Endothelial cell of umbilical vein (primary cell): ENCODE measurements at regions of chr22 and their contacts with region 1.

Region 1: DNA sequence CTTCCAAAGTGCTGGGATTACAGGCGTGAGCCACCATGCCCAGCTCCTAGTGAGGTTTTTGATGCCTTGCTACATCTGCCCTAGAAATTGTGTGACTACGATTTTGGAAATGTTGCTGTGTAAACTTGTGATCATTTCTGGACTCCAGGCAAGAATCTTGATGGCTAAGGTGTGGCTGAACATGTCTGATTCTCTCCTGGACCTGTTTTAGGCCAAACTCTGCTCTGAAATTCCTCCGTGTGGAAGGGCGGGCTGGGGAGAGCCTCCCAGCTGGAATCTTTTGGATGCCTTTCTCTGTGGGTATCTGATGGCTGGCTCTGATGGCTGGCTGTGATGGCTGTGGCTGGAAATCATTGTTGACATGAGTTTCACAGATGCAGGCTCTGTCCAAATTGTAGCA is 8.2 kb downstream of the PNPLA3 start:
- DNase-seq: no peak
- H3K4me3 ChIP-seq: no peak overlapping the region
- H3K27ac ChIP-seq: no peak overlapping the region
- H3K4me1 ChIP-seq: no peaks in the 10 kb centered on the region
- H3K27me3 ChIP-seq: no peaks in the 10 kb centered on the region
- CTCF ChIP-seq: no peak
- POLR2A ChIP-seq: no peak

Region 2: GRCh38 chr22:43796567-43796966 is 135.2 kb before region 1 on chr22:
- CTCF ChIA-PET with region 1: no interaction called
- POLR2A ChIA-PET with region 1: no interaction called
- dilution Hi-C with region 1: no loop called
- intact Hi-C with region 1: no loop called
- DNase-seq: no peak
- H3K4me3 ChIP-seq: no peak overlapping the region
- H3K27ac ChIP-seq: no peak overlapping the region
- H3K4me1 ChIP-seq: no peaks in the 10 kb centered on the region
- H3K27me3 ChIP-seq: peaks cover 0 to 6% of the 10 kb centered on the region in 2 experiments
- CTCF ChIP-seq: peak in 1 of 2 donors; percentile 8
- POLR2A ChIP-seq: no peak

Region 3: DNA sequence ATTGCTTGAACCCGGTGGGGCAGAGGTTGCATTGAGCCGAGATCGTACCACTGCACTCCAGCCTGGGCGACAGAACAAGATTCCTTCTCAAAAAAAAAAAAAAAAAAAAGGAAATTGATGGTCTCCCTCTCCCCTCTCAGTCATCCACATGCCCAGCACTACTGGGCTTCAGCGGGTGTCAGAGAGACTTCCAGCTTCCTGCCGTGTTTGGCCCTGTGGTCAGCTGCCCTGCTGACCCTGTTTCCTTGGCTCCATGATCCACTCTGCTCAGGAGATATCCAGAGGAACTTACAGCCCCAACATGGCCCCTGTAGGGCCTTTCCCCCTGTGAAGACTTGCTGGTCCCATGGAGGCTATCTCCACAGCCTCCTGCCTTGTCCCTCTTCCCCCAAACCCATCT is 14.2 kb before region 1 on chr22:
- CTCF ChIA-PET with region 1: no interaction called
- POLR2A ChIA-PET with region 1: no interaction called
- dilution Hi-C with region 1: no loop called
- intact Hi-C with region 1: no loop called
- DNase-seq: no peak
- H3K4me3 ChIP-seq: no peak overlapping the region
- H3K27ac ChIP-seq: no peak overlapping the region
- H3K4me1 ChIP-seq: peaks cover 17% of the 10 kb centered on the region
- H3K27me3 ChIP-seq: peaks cover 0 to 3% of the 10 kb centered on the region in 2 experiments
- CTCF ChIP-seq: no peak
- POLR2A ChIP-seq: no peak

Region 4: DNA sequence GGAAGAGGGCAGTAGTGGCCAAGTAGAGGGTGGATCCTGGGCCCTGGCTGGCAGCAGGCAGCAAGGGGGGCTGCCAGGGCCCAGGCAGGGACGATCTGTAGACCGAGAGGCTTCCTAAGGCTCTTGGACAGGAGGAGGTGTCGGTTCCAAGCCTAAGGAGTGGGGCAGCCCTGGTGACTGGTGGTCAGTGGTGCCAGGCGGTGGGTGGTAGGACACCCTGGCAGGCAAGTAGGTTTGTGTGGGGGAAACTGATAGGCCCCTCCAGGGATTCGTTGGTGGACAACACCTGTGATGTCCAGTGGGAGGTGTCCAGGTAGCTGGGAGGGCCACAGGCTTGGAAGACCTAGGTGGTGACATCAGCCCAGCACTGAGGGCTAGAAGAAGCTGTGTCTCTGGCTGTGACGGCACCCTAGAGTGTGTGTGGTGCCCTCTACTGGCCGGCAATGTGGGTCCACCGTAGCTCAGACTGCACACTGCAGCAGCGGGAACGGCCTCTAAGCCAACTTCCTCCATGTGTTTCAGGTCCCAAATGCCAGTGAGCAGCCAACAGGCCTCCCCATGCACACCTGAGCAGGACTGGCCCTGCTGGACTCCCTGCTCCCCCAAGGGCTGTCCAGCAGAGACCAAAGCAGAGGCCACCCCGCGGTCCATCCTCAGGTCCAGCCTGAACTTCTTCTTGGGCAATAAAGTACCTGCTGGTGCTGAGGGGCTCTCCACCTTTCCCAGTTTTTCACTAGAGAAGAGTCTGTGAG is 14.0 kb after region 1 on chr22:
- CTCF ChIA-PET with region 1: interaction called, 21 read pairs
- POLR2A ChIA-PET with region 1: no interaction called
- dilution Hi-C with region 1: no loop called
- intact Hi-C with region 1: no loop called
- DNase-seq: peak; percentile 63
- H3K4me3 ChIP-seq: no peak overlapping the region
- H3K27ac ChIP-seq: no peak overlapping the region
- H3K4me1 ChIP-seq: no peaks in the 10 kb centered on the region
- H3K27me3 ChIP-seq: no peaks in the 10 kb centered on the region
- CTCF ChIP-seq: peak; percentile 91 to 97
- POLR2A ChIP-seq: no peak

Region 5: DNA sequence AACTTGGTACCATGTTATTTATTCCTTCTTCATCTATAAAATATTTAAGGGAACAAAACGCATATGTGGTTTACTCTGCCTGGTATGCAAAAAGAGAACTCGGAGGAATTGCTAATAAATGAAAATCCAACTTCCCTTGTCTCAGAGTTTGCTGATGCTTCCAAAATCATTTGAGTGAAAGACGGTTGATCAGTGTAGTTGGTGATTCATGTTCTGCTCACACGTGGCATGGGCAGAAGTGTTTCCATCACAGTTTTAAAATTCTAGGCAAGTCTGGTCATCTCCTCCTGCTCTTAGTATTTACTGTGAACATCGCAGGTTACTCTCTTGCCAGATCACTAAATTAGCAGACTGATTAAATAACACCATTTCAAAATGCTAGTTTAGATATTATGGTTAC is 80.4 kb after region 1 on chr22:
- CTCF ChIA-PET with region 1: no interaction called
- POLR2A ChIA-PET with region 1: no interaction called
- dilution Hi-C with region 1: no loop called
- intact Hi-C with region 1: no loop called
- DNase-seq: no peak
- H3K4me3 ChIP-seq: no peak overlapping the region
- H3K27ac ChIP-seq: no peak overlapping the region
- H3K4me1 ChIP-seq: no peaks in the 10 kb centered on the region
- H3K27me3 ChIP-seq: no peaks in the 10 kb centered on the region
- CTCF ChIP-seq: no peak
- POLR2A ChIP-seq: no peak

Region 6: GRCh38 chr22:44574065-44574464 is 642.3 kb after region 1 on chr22:
- CTCF ChIA-PET with region 1: no interaction called
- POLR2A ChIA-PET with region 1: no interaction called
- dilution Hi-C with region 1: no loop called
- intact Hi-C with region 1: no loop called
- DNase-seq: peak; percentile 24
- H3K4me3 ChIP-seq: no peak overlapping the region
- H3K27ac ChIP-seq: no peak overlapping the region
- H3K4me1 ChIP-seq: no peaks in the 10 kb centered on the region
- H3K27me3 ChIP-seq: no peaks in the 10 kb centered on the region
- CTCF ChIP-seq: no peak
- POLR2A ChIP-seq: no peak